Endothelial cell of umbilical vein (primary cell): ENCODE measurements at regions of chr5 and their contacts with region 1.

Region 1: DNA sequence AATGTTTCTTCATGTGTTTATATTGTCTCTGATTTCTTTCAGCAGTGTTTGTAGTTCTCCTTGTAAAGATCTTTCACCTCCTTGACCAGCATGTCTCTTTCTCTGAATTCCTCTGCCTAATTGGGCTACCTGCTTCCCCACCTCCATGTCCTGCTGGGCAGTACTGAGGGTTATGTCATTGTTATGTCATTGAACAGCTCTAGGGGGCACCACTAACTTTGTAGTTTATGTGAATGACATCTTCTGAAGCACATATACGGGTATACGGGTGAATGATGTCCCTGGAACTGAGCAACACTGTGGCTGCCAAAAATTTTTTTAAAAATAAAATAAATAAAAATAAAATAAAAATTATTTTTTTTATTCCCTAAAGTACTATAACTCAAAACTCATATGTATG is 16.9 kb upstream of the SNCAIP start:
- DNase-seq: peak; percentile 37
- H3K4me3 ChIP-seq: no peak overlapping the region
- H3K27ac ChIP-seq: no peak overlapping the region
- H3K4me1 ChIP-seq: no peaks in the 10 kb centered on the region
- H3K27me3 ChIP-seq: peaks cover 0 to 4% of the 10 kb centered on the region in 2 experiments
- CTCF ChIP-seq: peak; percentile 21 to 43
- POLR2A ChIP-seq: no peak

Region 2: GRCh38 chr5:122202952-122203351 is 92.2 kb before region 1 on chr5:
- CTCF ChIA-PET with region 1: no interaction called
- POLR2A ChIA-PET with region 1: no interaction called
- dilution Hi-C with region 1: no loop called
- intact Hi-C with region 1: no loop called
- DNase-seq: no peak
- H3K4me3 ChIP-seq: no peak overlapping the region
- H3K27ac ChIP-seq: no peak overlapping the region
- H3K4me1 ChIP-seq: no peaks in the 10 kb centered on the region
- H3K27me3 ChIP-seq: peaks cover 8 to 14% of the 10 kb centered on the region in 2 experiments
- CTCF ChIP-seq: no peak
- POLR2A ChIP-seq: no peak

Region 3: GRCh38 chr5:122306461-122306860 is 11.3 kb after region 1 on chr5:
- CTCF ChIA-PET with region 1: interaction called, 13 read pairs
- POLR2A ChIA-PET with region 1: no interaction called
- dilution Hi-C with region 1: no loop called
- intact Hi-C with region 1: no loop called
- DNase-seq: peak; percentile 37
- H3K4me3 ChIP-seq: no peak overlapping the region
- H3K27ac ChIP-seq: no peak overlapping the region
- H3K4me1 ChIP-seq: no peaks in the 10 kb centered on the region
- H3K27me3 ChIP-seq: no peaks in the 10 kb centered on the region
- CTCF ChIP-seq: no peak
- POLR2A ChIP-seq: no peak